Activated CD8-positive, alpha-beta T cell treated with anti-CD3 and anti-CD28 coated beads for 36 hours (primary cell): ENCODE measurements at regions of chr2 and their contacts with region 1.

Region 1: DNA sequence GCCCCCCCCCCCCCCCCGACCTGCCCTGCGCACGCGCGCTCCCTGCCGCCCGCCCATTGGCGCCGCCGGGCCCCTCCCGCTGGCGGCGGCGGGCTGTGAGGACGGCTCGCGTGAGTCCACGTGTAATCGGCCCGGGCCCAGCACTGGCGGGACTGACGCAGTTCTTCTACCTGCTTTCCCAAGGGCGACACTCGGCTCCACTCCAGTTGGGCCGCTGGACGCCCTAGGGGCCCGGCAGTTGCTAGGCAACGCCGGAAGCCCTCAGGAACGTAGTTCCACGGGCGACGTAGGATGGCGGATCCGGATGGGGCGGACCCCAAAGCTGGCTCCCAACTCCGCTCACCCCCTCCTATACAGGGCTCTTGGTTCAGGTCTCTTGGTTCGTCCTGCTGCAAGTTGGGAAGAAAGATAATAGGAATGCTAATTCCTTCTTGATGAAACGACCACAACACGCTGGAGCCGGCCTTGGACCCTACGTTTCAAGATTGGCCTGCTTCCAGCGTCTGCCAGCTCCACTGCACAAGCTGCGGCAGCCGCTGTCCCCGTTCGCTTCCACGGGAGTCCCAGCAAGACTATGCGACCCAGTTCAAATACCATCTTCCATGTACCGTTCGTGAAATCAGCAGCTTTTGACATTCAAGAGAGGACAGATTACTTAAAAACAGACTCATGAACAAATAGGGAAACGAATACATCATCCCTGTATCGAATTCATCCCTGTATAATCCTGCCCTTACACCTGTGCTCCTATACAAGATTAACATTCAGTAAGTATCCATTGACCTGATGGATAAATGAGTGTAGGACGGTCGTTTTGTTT is 415 bp upstream of the MCFD2 start:
- DNase-seq: peak; percentile 84
- ATAC-seq: peak; percentile 89
- H3K4me3 Mint-ChIP-seq: peak overlapping the region; percentile 95
- H3K27ac Mint-ChIP-seq: peak overlapping the region; percentile 83
- H3K4me1 Mint-ChIP-seq: peaks cover 49% of the 10 kb centered on the region
- H3K27me3 Mint-ChIP-seq: no peaks in the 10 kb centered on the region
- CTCF ChIP-seq: no peak

Region 2: DNA sequence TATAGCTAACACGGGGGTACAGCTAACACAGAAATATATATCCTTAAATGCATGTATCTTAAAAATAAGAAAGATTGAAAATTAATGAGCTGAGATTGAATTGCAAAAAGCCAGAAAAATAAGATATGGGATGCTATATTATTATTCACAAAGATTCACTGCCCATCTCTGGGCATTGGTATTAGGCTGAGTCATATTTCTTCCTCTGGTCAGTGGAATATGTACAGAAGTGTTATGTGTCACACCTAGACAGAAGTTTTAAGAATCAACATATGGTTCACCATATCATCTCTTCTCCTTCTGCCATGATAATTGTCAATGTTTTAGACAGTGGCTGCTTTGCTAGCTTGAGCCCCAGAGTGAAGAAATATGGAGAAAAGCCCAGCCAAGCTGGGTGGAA is 13.6 kb after region 1 on chr2:
- CTCF ChIA-PET with region 1: interaction called, 36 read pairs
- POLR2A ChIA-PET with region 1: interaction called, 9 read pairs
- intact Hi-C with region 1: no loop called
- DNase-seq: no peak
- ATAC-seq: no peak
- H3K4me3 Mint-ChIP-seq: no peak overlapping the region
- H3K27ac Mint-ChIP-seq: no peak overlapping the region
- H3K4me1 Mint-ChIP-seq: peaks cover 3% of the 10 kb centered on the region
- H3K27me3 Mint-ChIP-seq: no peaks in the 10 kb centered on the region
- CTCF ChIP-seq: no peak